CD4-positive, alpha-beta memory T cell (primary cell): ENCODE measurements at regions of chr2 and their contacts with region 1.

Region 1: GRCh38 chr2:238426568-238427434 is at the start of gene ASB1:
- DNase-seq: peak; percentile 70 to 81 (median 75)
- H3K4me3 ChIP-seq: peak within 1 kb of the TSS; percentile 76 to 90
- H3K4me3 Mint-ChIP-seq: peak within 1 kb of the TSS; percentile 91 to 95 (median 93)
- H3K27ac ChIP-seq: peak within 1 kb of the TSS; percentile 65
- H3K27ac Mint-ChIP-seq: peak within 1 kb of the TSS; percentile 91 to 96 (median 94)
- H3K4me1 ChIP-seq: peaks cover 38% of the 10 kb centered on the region
- H3K4me1 Mint-ChIP-seq: peaks cover 31 to 54% (median 44%) of the 10 kb centered on the region in 4 donors
- H3K27me3 ChIP-seq: no peaks in the 10 kb centered on the region
- H3K27me3 Mint-ChIP-seq: no peaks in the 10 kb centered on the region
- total RNA-seq, gene ASB1: 46.5 to 48.4 TPM

Region 2: GRCh38 chr2:238003234-238004031 is 423.4 kb before region 1 on chr2:
- CTCF ChIA-PET with region 1: no interaction called
- POLR2A ChIA-PET with region 1: no interaction called
- intact Hi-C with region 1: no loop called
- DNase-seq: peak in 4 of 5 donors; percentile 8 to 33 (median 20)
- H3K4me3 ChIP-seq: no peak overlapping the region
- H3K4me3 Mint-ChIP-seq: peak overlapping the region in 4 of 8 donors; percentile 10 to 60 (median 26)
- H3K27ac ChIP-seq: no peak overlapping the region
- H3K27ac Mint-ChIP-seq: peak overlapping the region; percentile 13 to 82 (median 62)
- H3K4me1 ChIP-seq: peaks cover 23% of the 10 kb centered on the region
- H3K4me1 Mint-ChIP-seq: peaks cover 31 to 60% (median 36%) of the 10 kb centered on the region in 4 donors
- H3K27me3 ChIP-seq: no peaks in the 10 kb centered on the region
- H3K27me3 Mint-ChIP-seq: no peaks in the 10 kb centered on the region

Region 3: GRCh38 chr2:238320246-238320647 is 106.6 kb before region 1 on chr2 and contains the start of gene TRAF3IP1:
- CTCF ChIA-PET with region 1: no interaction called
- POLR2A ChIA-PET with region 1: no interaction called
- intact Hi-C with region 1: loop called (anchors 10 kb)
- DNase-seq: peak; percentile 84 to 87 (median 86)
- H3K4me3 ChIP-seq: peak within 1 kb of the TSS; percentile 29 to 60
- H3K4me3 Mint-ChIP-seq: peak within 1 kb of the TSS; percentile 79 to 86 (median 82)
- H3K27ac ChIP-seq: no peak within 1 kb of the TSS
- H3K27ac Mint-ChIP-seq: peak within 1 kb of the TSS; percentile 43 to 88 (median 64)
- H3K4me1 ChIP-seq: peaks cover 18% of the 10 kb centered on the region
- H3K4me1 Mint-ChIP-seq: peaks cover 12 to 25% (median 19%) of the 10 kb centered on the region in 4 donors
- H3K27me3 ChIP-seq: no peaks in the 10 kb centered on the region
- H3K27me3 Mint-ChIP-seq: peaks cover 0 to 3% of the 10 kb centered on the region in 2 donors
- total RNA-seq, gene TRAF3IP1: 6.8 to 11.0 TPM

Region 4: GRCh38 chr2:238493880-238494572 is 67.2 kb after region 1 on chr2:
- CTCF ChIA-PET with region 1: no interaction called
- POLR2A ChIA-PET with region 1: no interaction called
- intact Hi-C with region 1: no loop called
- DNase-seq: peak in 4 of 5 donors; percentile 5 to 22 (median 16)
- H3K4me3 ChIP-seq: peak overlapping the region in 1 of 2 donors; percentile 20
- H3K4me3 Mint-ChIP-seq: peak overlapping the region in 7 of 8 donors; percentile 45 to 80 (median 64)
- H3K27ac ChIP-seq: no peak overlapping the region
- H3K27ac Mint-ChIP-seq: peak overlapping the region; percentile 22 to 87 (median 76)
- H3K4me1 ChIP-seq: peaks cover 27% of the 10 kb centered on the region
- H3K4me1 Mint-ChIP-seq: peaks cover 12 to 36% (median 26%) of the 10 kb centered on the region in 4 donors
- H3K27me3 ChIP-seq: no peaks in the 10 kb centered on the region
- H3K27me3 Mint-ChIP-seq: no peaks in the 10 kb centered on the region